Activated T-helper 1 cell treated with anti-CD3 and anti-CD28 coated beads, Interleukin-12 subunit alpha, Interleukin-12 subunit beta, Interleukin-2, Interleukin-4 antibody, amounts not matched to agents 30 ng/mL and 10 ng/mL and 1 ng/mL, durations not matched to agents 14 hours and 24 hours and 36 hours (primary cell): ENCODE measurements at regions of chr13 and their contacts with region 1.

Region 1: GRCh38 chr13:79374578-79374977 is 31.5 kb downstream of the RBM26 start:
- DNase-seq: no peak
- H3K4me3 Mint-ChIP-seq: no peak overlapping the region
- H3K27ac Mint-ChIP-seq: no peak overlapping the region
- H3K4me1 Mint-ChIP-seq: peaks cover 5% of the 10 kb centered on the region
- H3K27me3 Mint-ChIP-seq: no peaks in the 10 kb centered on the region

Region 2: DNA sequence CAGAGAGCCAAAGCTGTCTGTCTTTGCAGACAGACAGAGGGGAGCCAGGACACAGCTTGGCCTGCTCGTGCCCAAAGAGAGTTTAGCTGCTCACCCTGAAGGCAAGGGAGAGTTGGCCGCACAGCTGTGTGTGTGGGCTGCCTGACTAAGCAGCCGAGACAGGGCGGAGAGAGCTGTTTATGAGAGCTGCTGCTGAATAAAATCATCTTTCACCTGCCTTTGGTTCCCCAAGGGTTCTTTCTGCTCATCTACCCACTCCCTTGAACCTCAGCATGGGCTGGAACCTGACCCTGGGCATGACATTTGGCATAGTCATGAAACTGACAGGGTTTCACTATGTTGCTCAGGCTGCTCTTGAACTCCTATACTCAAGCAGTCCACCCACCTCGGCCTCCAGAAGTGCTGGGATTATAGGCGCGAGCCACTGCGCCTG is 66.7 kb before region 1 on chr13:
- intact Hi-C with region 1: no loop called
- DNase-seq: no peak
- H3K4me3 Mint-ChIP-seq: no peak overlapping the region
- H3K27ac Mint-ChIP-seq: no peak overlapping the region
- H3K4me1 Mint-ChIP-seq: no peaks in the 10 kb centered on the region
- H3K27me3 Mint-ChIP-seq: peaks cover 19% of the 10 kb centered on the region

Region 3: GRCh38 chr13:79336966-79337365 is 37.6 kb before region 1 on chr13:
- intact Hi-C with region 1: loop called (anchors 5 kb)
- DNase-seq: no peak
- H3K4me3 Mint-ChIP-seq: no peak overlapping the region
- H3K27ac Mint-ChIP-seq: no peak overlapping the region
- H3K4me1 Mint-ChIP-seq: peaks cover 5% of the 10 kb centered on the region
- H3K27me3 Mint-ChIP-seq: no peaks in the 10 kb centered on the region

Region 4: GRCh38 chr13:79349011-79349410 is 25.6 kb before region 1 on chr13:
- intact Hi-C with region 1: loop called (anchors 2 kb)
- DNase-seq: no peak
- H3K4me3 Mint-ChIP-seq: no peak overlapping the region
- H3K27ac Mint-ChIP-seq: no peak overlapping the region
- H3K4me1 Mint-ChIP-seq: peaks cover 24% of the 10 kb centered on the region
- H3K27me3 Mint-ChIP-seq: no peaks in the 10 kb centered on the region

Region 5: GRCh38 chr13:79393564-79394249 is 19.1 kb after region 1 on chr13:
- intact Hi-C with region 1: loop called (anchors 2 kb)
- DNase-seq: no peak
- H3K4me3 Mint-ChIP-seq: peak overlapping the region; percentile 64
- H3K27ac Mint-ChIP-seq: peak overlapping the region; percentile 60
- H3K4me1 Mint-ChIP-seq: peaks cover 62% of the 10 kb centered on the region
- H3K27me3 Mint-ChIP-seq: no peaks in the 10 kb centered on the region